Activated T-helper 1 cell treated with anti-CD3 and anti-CD28 coated beads, Interleukin-12 subunit alpha, Interleukin-12 subunit beta, Interleukin-2, Interleukin-4 antibody, amounts not matched to agents 30 ng/mL and 10 ng/mL and 1 ng/mL, durations not matched to agents 14 hours and 24 hours and 36 hours (primary cell): ENCODE measurements at regions of chr4 and their contacts with region 1.

Region 1: GRCh38 chr4:109921384-109921808 is 8.7 kb downstream of the EGF start:
- DNase-seq: no peak
- H3K4me3 Mint-ChIP-seq: no peak overlapping the region
- H3K27ac Mint-ChIP-seq: no peak overlapping the region
- H3K4me1 Mint-ChIP-seq: no peaks in the 10 kb centered on the region
- H3K27me3 Mint-ChIP-seq: peaks cover 6% of the 10 kb centered on the region

Region 2: GRCh38 chr4:109248322-109248900 is 673.0 kb before region 1 on chr4:
- intact Hi-C with region 1: loop called (anchors 10 kb)
- DNase-seq: no peak
- H3K4me3 Mint-ChIP-seq: no peak overlapping the region
- H3K27ac Mint-ChIP-seq: no peak overlapping the region
- H3K4me1 Mint-ChIP-seq: no peaks in the 10 kb centered on the region
- H3K27me3 Mint-ChIP-seq: peaks cover 4% of the 10 kb centered on the region